ENCODE measurements at regions of chr7 and their contacts with region 1.

Region 1: DNA sequence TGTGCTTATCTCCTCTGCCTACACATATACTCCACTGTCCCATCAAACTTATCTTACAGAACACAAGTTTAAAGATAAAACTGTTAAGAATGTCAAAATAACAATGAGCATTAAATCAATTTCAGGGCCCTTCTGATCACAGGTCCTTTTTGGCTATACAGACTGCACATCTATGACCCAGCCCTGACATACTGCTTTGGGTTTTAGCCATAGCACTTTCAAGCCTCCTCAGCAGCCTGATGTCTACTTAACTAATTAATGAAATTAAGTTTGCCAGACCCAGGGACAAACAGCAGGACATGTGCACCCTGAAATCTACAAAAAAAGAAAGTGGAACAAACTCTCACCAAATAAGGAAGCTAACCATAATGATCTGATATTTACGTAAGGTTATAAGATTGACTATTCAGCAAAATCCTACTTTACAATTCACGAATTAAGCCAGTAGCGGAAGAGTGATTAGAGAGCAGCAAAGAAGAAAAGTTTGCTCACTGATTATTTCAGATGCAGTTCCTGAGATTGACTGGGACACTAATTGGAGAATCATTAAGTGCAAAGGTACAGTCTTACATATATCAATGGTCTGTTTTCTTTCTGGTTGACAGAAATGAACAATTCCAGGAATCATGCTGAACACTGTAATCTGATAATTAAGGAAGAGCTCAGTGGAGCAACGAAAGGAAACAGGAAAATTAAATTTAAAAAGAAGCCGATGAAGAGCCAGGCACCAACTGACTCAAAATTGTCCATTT is 669.3 kb upstream of the LRRN3 start:
- DNase-seq: no peak
- CTCF ChIP-seq: no peak

Region 2: DNA sequence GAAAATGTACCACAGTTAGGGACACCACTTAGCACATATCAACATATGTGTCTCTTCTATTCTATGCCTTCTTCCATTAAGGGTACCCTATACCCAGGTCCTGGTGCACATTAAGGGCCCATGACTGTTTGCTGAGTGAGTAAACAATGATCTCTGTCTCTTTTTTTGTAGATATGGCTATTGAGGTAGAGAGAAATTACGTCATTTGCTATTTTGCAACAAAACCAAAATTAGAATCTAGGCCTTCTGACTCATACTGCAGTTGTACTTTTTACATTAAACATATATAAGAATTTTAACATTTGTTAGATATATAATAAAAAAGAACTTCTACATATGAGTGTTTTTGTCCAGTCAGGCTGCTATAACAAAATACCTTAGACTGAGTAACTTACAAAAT is 14.0 kb before region 1 on chr7:
- CTCF ChIA-PET with region 1: interaction called, 10 read pairs
- POLR2A ChIA-PET with region 1: no interaction called
- DNase-seq: no peak
- CTCF ChIP-seq: no peak

Measured in GM10248 (cell line).